Thyroid gland (tissue), 4 donors: ENCODE measurements at regions of chr3 and their contacts with region 1.

Region 1: DNA sequence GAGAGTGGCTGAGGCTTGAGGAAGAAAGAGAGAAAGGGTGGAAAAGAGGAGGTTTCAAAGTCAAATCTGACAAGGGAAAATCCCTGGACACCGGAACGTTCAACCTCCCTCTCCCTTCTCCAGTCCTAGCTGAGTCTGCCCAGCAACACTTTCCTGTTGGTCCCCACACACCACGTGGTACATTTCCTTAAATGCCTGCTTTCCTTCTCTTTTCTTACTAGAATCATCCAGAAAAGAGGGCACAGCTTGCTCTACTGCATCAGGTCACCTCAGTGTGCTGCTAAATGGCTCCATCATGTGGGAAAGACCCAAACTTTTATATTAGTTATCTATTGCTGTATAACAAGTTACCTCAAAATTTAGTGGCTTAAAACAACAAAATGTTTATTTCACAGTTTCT is 181.2 kb downstream of the NECTIN3 start:
- DNase-seq: peak; percentile 55 to 68
- H3K4me3 ChIP-seq: no peak overlapping the region
- H3K27ac ChIP-seq: peak overlapping the region in 1 of 3 donors; percentile 41
- H3K4me1 ChIP-seq: peaks cover 0 to 1% of the 10 kb centered on the region in 2 donors
- H3K27me3 ChIP-seq: no peaks in the 10 kb centered on the region
- CTCF ChIP-seq: peak in 4 of 6 experiments; percentile 30 to 64 (median 56)
- POLR2A ChIP-seq: peak in 1 of 2 donors; percentile 58

Region 2: GRCh38 chr3:111071257-111072015 is 181.3 kb before region 1 on chr3 and contains the start of gene NECTIN3:
- intact Hi-C with region 1: loop called (anchors 10 kb)
- DNase-seq: peak; percentile 96 to 97
- H3K4me3 ChIP-seq: peak within 1 kb of the TSS; percentile 78 to 96 (median 88)
- H3K27ac ChIP-seq: peak within 1 kb of the TSS; percentile 84 to 91 (median 84)
- H3K4me1 ChIP-seq: peaks cover 16 to 19% of the 10 kb centered on the region in 2 donors
- H3K27me3 ChIP-seq: no peaks in the 10 kb centered on the region
- CTCF ChIP-seq: no peak
- POLR2A ChIP-seq: peak; percentile 32 to 88
- total RNA-seq, gene NECTIN3: 60.3 to 95.4 (median 87.7) TPM